ENCODE measurements at regions of chr5 and their contacts with region 1.

Region 1: GRCh38 chr5:6377905-6378765 is at the start of gene MED10:
- DNase-seq: peak; percentile 82
- ATAC-seq: peak; percentile 98
- H3K4me3 ChIP-seq: peak within 1 kb of the TSS; percentile 87 to 93
- H3K27ac ChIP-seq: peak within 1 kb of the TSS; percentile 79
- H3K4me1 ChIP-seq: peaks cover 9 to 14% of the 10 kb centered on the region in 2 experiments; a peak in 3 of 4 replicates
- H3K27me3 ChIP-seq: no peaks in the 10 kb centered on the region
- CTCF ChIP-seq: no peak
- POLR2A ChIP-seq: peak; percentile 38
- RAD21 ChIP-seq: no peak
- total RNA-seq, gene MED10: 35.0 TPM

Region 2: DNA sequence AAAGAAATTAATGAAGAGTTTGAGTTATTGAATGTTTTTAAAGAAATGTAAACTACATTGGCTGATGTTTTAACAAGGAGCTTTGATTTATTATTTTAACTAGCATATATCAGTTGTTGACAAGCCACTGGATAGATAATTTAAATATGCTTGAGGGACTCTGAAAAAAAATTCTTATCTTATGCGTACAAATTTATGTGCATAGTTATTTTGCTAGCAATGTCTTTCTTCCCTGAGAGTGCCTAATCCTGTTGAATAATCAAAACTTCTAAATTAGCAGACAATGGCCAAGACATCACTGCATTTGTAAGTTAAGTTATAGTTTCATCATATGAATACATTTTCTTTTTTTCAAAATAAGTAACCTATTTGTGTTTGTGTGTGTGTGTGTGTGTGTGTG is 342.1 kb before region 1 on chr5:
- CTCF ChIA-PET with region 1: no interaction called
- POLR2A ChIA-PET with region 1: no interaction called
- RAD21 ChIA-PET with region 1: no interaction called
- intact Hi-C with region 1: no loop called
- DNase-seq: no peak
- ATAC-seq: no peak
- H3K4me3 ChIP-seq: no peak overlapping the region
- H3K27ac ChIP-seq: no peak overlapping the region
- H3K4me1 ChIP-seq: no peaks in the 10 kb centered on the region
- H3K27me3 ChIP-seq: no peaks in the 10 kb centered on the region
- CTCF ChIP-seq: no peak
- POLR2A ChIP-seq: no peak
- RAD21 ChIP-seq: no peak

Region 3: DNA sequence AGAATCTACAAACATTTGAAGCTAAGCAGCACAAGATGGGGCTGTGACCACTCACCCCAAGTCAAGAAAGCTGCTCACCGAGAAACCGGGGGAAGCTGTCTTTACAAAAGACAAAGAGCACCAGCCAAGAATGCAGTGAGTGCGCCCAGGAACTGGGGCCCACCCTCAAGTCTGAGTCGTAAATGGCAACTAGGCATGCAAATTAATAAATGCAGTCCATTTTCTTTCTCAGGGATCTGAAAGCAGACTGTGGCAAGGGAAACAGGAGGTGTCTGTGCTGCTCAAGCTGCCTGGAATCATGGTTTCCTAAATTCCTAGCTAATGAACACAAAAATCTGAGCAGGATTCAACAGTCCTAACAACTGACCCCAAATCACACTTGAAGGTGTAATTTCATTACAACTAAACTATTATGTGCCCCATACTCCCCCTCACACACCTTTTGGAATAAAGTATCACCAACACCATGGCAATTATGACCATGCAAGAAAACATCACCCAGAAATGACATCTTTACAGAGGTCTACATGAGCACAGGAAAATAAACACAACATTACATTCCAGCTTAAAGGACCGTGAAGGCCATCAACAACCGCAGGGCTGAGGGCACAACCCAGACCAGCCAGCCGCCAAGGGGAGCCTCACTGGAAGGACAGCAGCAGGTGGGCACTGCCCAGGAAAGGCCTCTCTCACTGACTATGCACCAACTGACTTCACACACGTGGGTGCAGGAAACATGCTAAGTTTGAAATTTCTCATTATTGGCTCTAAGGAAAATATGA is 237.1 kb after region 1 on chr5:
- CTCF ChIA-PET with region 1: no interaction called
- POLR2A ChIA-PET with region 1: no interaction called
- RAD21 ChIA-PET with region 1: no interaction called
- intact Hi-C with region 1: loop called (anchors 10 kb)
- DNase-seq: no peak
- ATAC-seq: no peak
- H3K4me3 ChIP-seq: no peak overlapping the region
- H3K27ac ChIP-seq: no peak overlapping the region
- H3K4me1 ChIP-seq: no peaks in the 10 kb centered on the region
- H3K27me3 ChIP-seq: no peaks in the 10 kb centered on the region
- CTCF ChIP-seq: no peak
- POLR2A ChIP-seq: no peak
- RAD21 ChIP-seq: no peak

Region 4: DNA sequence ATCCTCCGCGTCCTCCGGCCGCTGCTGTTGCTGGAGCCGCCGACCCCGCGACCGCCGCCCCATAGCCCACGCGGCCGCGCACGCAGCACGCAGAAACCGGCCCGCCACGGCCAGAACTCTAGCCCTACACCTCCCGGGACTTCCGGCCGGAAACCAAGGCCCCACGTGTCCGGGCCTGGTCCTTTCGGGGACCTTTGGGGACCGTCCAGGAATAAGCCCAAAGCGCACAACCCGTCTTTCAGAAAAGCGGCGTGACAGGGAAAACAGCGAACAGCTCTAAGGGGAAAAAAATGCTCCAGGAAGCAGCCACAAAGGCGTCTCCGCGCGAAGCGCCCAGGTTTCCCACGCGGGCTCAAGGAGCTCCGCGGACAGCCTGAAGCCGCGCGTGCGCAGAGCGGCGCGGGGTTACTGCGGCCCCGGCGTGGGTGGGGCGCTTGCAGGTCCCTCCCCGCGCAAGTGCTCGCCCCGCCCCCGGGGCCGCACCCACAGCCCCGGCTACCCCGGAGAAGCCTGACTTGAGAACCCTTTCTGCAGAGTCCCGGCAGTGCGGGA is 254.9 kb after region 1 on chr5 and contains the starts of genes NSUN2 and SRD5A1:
- CTCF ChIA-PET with region 1: no interaction called
- POLR2A ChIA-PET with region 1: no interaction called
- RAD21 ChIA-PET with region 1: no interaction called
- intact Hi-C with region 1: loop called (anchors 5 kb)
- DNase-seq: peak; percentile 82
- ATAC-seq: peak; percentile 90
- H3K4me3 ChIP-seq: peak within 1 kb of the TSS; percentile 87 to 96
- H3K27ac ChIP-seq: peak within 1 kb of the TSS; percentile 95
- H3K4me1 ChIP-seq: peaks cover 11 to 18% of the 10 kb centered on the region in 2 experiments; a peak in 3 of 4 replicates
- H3K27me3 ChIP-seq: no peaks in the 10 kb centered on the region
- CTCF ChIP-seq: no peak
- POLR2A ChIP-seq: no peak
- RAD21 ChIP-seq: no peak
- total RNA-seq, gene NSUN2: 101 TPM
- total RNA-seq, gene SRD5A1: 24.7 TPM

Region 5: GRCh38 chr5:6712577-6713275 is 334.6 kb after region 1 on chr5:
- CTCF ChIA-PET with region 1: no interaction called
- POLR2A ChIA-PET with region 1: no interaction called
- RAD21 ChIA-PET with region 1: no interaction called
- intact Hi-C with region 1: loop called (anchors 1 kb)
- DNase-seq: peak; percentile 89
- ATAC-seq: peak; percentile 74
- H3K4me3 ChIP-seq: peak overlapping the region; percentile 59 to 75
- H3K27ac ChIP-seq: peak overlapping the region; percentile 98
- H3K4me1 ChIP-seq: peaks cover 15 to 29% of the 10 kb centered on the region in 2 experiments
- H3K27me3 ChIP-seq: no peaks in the 10 kb centered on the region
- CTCF ChIP-seq: no peak
- POLR2A ChIP-seq: peak; percentile 50
- RAD21 ChIP-seq: peak; percentile 2; the same call in 1 of the 2 replicates

Region 6: GRCh38 chr5:6745706-6746222 is 367.6 kb after region 1 on chr5:
- CTCF ChIA-PET with region 1: no interaction called
- POLR2A ChIA-PET with region 1: no interaction called
- RAD21 ChIA-PET with region 1: no interaction called
- intact Hi-C with region 1: loop called (anchors 10 kb)
- DNase-seq: peak; percentile 31
- ATAC-seq: peak; percentile 80
- H3K4me3 ChIP-seq: no peak overlapping the region
- H3K27ac ChIP-seq: no peak overlapping the region
- H3K4me1 ChIP-seq: no peaks in the 10 kb centered on the region
- H3K27me3 ChIP-seq: no peaks in the 10 kb centered on the region
- CTCF ChIP-seq: peak; percentile 16 to 86 (median 72); a peak in 5 of 6 replicates
- POLR2A ChIP-seq: no peak
- RAD21 ChIP-seq: peak; percentile 72

Measured in HCT116 (cell line).